Activated naive CD4-positive, alpha-beta T cell treated with anti-CD3 and anti-CD28 coated beads, Interleukin-2, amount 10 ng/mL, durations not matched to agents 7 days and 5 days (primary cell): ENCODE measurements at regions of chr10 and their contacts with region 1.

Region 1: DNA sequence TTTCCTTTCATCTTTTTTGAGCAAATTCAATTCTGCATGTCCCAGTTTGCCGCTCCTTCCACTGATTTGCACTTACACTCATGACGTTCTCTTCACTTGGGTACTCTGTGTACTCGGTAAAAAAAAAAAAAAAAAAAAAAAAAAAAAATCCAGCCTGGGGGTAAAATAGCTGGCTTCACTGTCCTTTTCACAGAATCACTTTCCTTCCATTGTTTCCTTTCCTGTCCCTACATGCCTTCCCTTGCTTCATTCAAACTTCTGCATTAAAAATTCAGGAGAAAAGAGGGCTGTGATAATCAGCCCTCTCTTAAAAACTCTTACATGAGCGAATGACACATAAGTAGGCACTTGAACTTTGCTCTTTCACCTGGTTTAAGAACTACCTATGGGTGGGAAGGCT is 8.7 kb downstream of the ANKRD1 start:
- DNase-seq: no peak
- H3K4me3 Mint-ChIP-seq: no peak overlapping the region
- H3K27ac Mint-ChIP-seq: no peak overlapping the region
- H3K4me1 Mint-ChIP-seq: peaks cover 6% of the 10 kb centered on the region
- H3K27me3 Mint-ChIP-seq: peaks cover 5% of the 10 kb centered on the region

Region 2: DNA sequence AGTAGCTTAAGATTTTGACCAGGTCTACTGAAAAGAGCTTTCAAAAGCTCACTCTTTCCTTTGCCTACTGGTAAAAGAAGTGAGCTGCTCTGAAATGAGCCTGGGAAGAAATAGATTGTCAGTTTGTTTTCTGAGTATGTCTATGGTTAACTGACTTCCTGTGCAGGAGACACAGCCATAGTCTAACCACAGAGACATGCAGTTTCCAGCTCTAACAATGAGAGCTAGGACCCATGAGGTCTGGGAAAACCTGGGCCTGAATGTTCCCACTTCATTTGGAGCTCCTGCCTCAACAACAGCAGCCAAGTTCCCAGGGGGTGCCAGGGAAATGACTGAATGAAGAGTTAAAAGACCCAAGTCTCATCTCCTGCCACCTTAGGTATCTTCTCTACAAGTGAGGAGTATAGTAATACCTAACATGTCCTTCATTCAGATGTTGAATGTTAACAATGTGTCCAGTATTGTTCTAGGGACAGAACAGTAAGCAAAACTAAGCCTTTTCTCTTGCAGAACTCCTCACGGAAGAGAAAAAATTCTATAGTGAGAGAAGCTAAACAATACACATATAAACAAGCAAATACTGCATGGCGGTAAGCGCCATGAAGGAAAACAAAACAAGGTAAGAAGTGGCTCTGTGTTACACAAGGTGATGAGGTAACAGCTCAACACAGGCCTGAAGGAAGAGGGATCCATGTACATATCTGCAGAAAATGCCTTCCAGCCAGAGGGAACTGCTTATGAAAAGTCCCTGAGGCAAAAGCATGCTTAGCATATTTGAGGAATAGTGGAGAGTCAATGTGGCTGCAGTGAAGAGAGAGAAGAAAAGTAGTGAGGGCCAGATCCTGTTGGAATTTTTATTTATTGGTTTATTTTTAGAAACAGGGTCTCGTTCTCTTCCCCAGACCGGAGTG is 35.1 kb after region 1 on chr10:
- CTCF ChIA-PET with region 1: interaction called, 26 read pairs
- DNase-seq: peak; percentile 25
- H3K4me3 Mint-ChIP-seq: no peak overlapping the region
- H3K27ac Mint-ChIP-seq: peak overlapping the region; percentile 56
- H3K4me1 Mint-ChIP-seq: peaks cover 17% of the 10 kb centered on the region
- H3K27me3 Mint-ChIP-seq: no peaks in the 10 kb centered on the region

Region 3: GRCh38 chr10:90969947-90970684 is 57.9 kb after region 1 on chr10:
- CTCF ChIA-PET with region 1: interaction called, 11 read pairs
- DNase-seq: no peak
- H3K4me3 Mint-ChIP-seq: no peak overlapping the region
- H3K27ac Mint-ChIP-seq: no peak overlapping the region
- H3K4me1 Mint-ChIP-seq: no peaks in the 10 kb centered on the region
- H3K27me3 Mint-ChIP-seq: peaks cover 18% of the 10 kb centered on the region